Natural killer cell (primary cell): ENCODE measurements at regions of chr3 and their contacts with region 1.

Region 1: GRCh38 chr3:28328188-28329151 is 20.1 kb upstream of the ZCWPW2 start:
- DNase-seq: peak in 1 of 2 donors; percentile 74
- ATAC-seq: peak; percentile 30 to 58 (median 34)
- H3K4me3 ChIP-seq: no peak overlapping the region
- H3K4me3 Mint-ChIP-seq: peak overlapping the region; percentile 50
- H3K27ac ChIP-seq: no peak overlapping the region
- H3K27ac Mint-ChIP-seq: peak overlapping the region; percentile 59 to 79
- H3K4me1 ChIP-seq: no peaks in the 10 kb centered on the region
- H3K4me1 Mint-ChIP-seq: peaks cover 36 to 44% of the 10 kb centered on the region in 2 donors
- H3K27me3 ChIP-seq: no peaks in the 10 kb centered on the region
- H3K27me3 Mint-ChIP-seq: no peaks in the 10 kb centered on the region
- CTCF ChIP-seq: peak; percentile 90

Region 2: GRCh38 chr3:27357665-27358258 is 970.7 kb before region 1 on chr3:
- intact Hi-C with region 1: loop called (anchors 2 kb)
- DNase-seq: peak in 1 of 2 donors; percentile 80
- ATAC-seq: peak; percentile 89 to 99 (median 96)
- H3K4me3 ChIP-seq: no peak overlapping the region
- H3K4me3 Mint-ChIP-seq: peak overlapping the region; percentile 4
- H3K27ac ChIP-seq: no peak overlapping the region
- H3K27ac Mint-ChIP-seq: no peak overlapping the region
- H3K4me1 ChIP-seq: peaks cover 5% of the 10 kb centered on the region
- H3K4me1 Mint-ChIP-seq: peaks cover 7 to 23% of the 10 kb centered on the region in 2 donors
- H3K27me3 ChIP-seq: no peaks in the 10 kb centered on the region
- H3K27me3 Mint-ChIP-seq: no peaks in the 10 kb centered on the region
- CTCF ChIP-seq: peak; percentile 68

Region 3: DNA sequence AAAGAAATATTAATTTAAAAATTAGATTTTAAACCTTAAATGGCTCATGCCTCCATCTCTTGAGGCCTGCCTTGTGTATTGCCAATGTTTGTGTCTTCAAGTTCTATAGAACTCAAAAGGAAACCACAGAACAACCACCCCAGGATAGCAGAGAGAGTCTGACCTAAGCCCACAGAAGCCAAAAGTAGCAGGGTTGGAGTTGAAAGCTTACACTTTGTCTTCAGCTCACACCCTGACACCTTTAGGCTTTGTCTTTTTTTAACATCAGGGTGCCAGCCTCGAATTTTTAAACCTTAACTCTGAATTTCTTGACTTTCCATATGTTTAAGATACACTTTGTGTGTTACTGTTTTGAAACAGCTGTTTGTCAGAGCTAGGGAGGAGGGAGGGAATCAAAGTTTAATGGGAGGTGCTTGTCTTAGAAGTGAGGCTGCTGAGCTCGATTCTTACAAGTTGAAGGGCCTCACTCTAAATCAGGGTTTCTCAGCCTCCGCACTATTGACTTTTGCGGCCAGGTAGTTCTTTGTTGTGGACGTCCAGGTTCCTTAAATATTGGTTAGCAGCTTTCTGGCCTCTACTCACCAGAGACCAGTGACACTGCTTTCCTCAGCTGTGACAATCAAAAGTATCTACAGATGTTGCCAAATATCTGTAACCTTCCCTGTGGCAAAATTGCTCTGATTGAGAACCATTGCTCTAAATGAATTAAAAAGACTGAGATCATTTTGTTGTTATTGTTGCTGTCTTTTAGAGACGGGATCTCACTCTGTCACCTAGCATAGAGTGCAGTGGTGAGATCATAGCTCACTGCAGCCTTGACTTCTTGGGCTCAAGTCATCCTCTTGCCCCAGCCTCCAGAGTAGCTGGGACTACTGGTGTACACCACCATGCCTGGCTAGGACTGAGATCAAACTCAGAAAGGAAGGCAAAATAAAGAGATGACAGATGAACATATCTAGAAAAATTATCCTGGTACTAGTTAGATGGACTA is 467.1 kb before region 1 on chr3:
- intact Hi-C with region 1: loop called (anchors 1 kb)
- DNase-seq: peak in 1 of 2 donors; percentile 65
- ATAC-seq: peak; percentile 90 to 99 (median 92)
- H3K4me3 ChIP-seq: no peak overlapping the region
- H3K4me3 Mint-ChIP-seq: peak overlapping the region; percentile 50
- H3K27ac ChIP-seq: peak overlapping the region; percentile 13
- H3K27ac Mint-ChIP-seq: peak overlapping the region; percentile 61 to 69
- H3K4me1 ChIP-seq: peaks cover 26% of the 10 kb centered on the region
- H3K4me1 Mint-ChIP-seq: peaks cover 39 to 40% of the 10 kb centered on the region in 2 donors
- H3K27me3 ChIP-seq: no peaks in the 10 kb centered on the region
- H3K27me3 Mint-ChIP-seq: peaks cover 0 to 3% of the 10 kb centered on the region in 2 donors
- CTCF ChIP-seq: no peak

Region 4: DNA sequence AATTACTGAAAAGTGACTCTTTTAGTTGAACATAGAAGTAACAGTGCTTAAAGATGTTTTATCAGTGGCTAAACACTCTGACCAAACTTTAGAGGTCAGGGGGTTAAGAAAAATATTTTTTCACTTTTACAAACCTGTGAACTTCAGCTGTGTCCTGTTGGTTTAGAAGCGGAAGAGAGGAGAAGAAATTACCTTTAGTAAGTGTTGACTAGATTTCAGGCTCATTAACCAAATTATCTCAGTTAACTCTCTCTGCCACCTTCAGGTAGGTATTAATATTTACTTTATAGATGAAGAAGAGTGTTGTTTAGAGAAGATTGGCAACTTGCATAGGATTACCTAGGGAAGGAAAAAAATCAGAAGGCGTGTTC is 239.0 kb before region 1 on chr3:
- intact Hi-C with region 1: loop called (anchors 5 kb)
- DNase-seq: peak in 1 of 2 donors; percentile 35
- ATAC-seq: peak; percentile 66 to 86 (median 71)
- H3K4me3 ChIP-seq: no peak overlapping the region
- H3K4me3 Mint-ChIP-seq: peak overlapping the region; percentile 59
- H3K27ac ChIP-seq: peak overlapping the region; percentile 58
- H3K27ac Mint-ChIP-seq: peak overlapping the region; percentile 80 to 84
- H3K4me1 ChIP-seq: peaks cover 13% of the 10 kb centered on the region
- H3K4me1 Mint-ChIP-seq: peaks cover 49 to 51% of the 10 kb centered on the region in 2 donors
- H3K27me3 ChIP-seq: no peaks in the 10 kb centered on the region
- H3K27me3 Mint-ChIP-seq: no peaks in the 10 kb centered on the region
- CTCF ChIP-seq: no peak

Region 5: GRCh38 chr3:28262001-28262400 is 66.5 kb before region 1 on chr3:
- intact Hi-C with region 1: no loop called
- DNase-seq: no peak
- ATAC-seq: no peak
- H3K4me3 ChIP-seq: no peak overlapping the region
- H3K4me3 Mint-ChIP-seq: no peak overlapping the region
- H3K27ac ChIP-seq: no peak overlapping the region
- H3K27ac Mint-ChIP-seq: no peak overlapping the region
- H3K4me1 ChIP-seq: no peaks in the 10 kb centered on the region
- H3K4me1 Mint-ChIP-seq: peaks cover 6 to 7% of the 10 kb centered on the region in 2 donors
- H3K27me3 ChIP-seq: no peaks in the 10 kb centered on the region
- H3K27me3 Mint-ChIP-seq: no peaks in the 10 kb centered on the region
- CTCF ChIP-seq: no peak

Region 6: GRCh38 chr3:28295898-28296490 is 32.5 kb before region 1 on chr3:
- intact Hi-C with region 1: loop called (anchors 2 kb)
- DNase-seq: peak in 1 of 2 donors; percentile 19
- ATAC-seq: peak; percentile 28 to 31 (median 29)
- H3K4me3 ChIP-seq: peak overlapping the region; percentile 72
- H3K4me3 Mint-ChIP-seq: peak overlapping the region; percentile 92
- H3K27ac ChIP-seq: peak overlapping the region; percentile 94
- H3K27ac Mint-ChIP-seq: peak overlapping the region; percentile 94 to 95
- H3K4me1 ChIP-seq: peaks cover 9% of the 10 kb centered on the region
- H3K4me1 Mint-ChIP-seq: peaks cover 61 to 72% of the 10 kb centered on the region in 2 donors
- H3K27me3 ChIP-seq: no peaks in the 10 kb centered on the region
- H3K27me3 Mint-ChIP-seq: no peaks in the 10 kb centered on the region
- CTCF ChIP-seq: no peak

Region 7: DNA sequence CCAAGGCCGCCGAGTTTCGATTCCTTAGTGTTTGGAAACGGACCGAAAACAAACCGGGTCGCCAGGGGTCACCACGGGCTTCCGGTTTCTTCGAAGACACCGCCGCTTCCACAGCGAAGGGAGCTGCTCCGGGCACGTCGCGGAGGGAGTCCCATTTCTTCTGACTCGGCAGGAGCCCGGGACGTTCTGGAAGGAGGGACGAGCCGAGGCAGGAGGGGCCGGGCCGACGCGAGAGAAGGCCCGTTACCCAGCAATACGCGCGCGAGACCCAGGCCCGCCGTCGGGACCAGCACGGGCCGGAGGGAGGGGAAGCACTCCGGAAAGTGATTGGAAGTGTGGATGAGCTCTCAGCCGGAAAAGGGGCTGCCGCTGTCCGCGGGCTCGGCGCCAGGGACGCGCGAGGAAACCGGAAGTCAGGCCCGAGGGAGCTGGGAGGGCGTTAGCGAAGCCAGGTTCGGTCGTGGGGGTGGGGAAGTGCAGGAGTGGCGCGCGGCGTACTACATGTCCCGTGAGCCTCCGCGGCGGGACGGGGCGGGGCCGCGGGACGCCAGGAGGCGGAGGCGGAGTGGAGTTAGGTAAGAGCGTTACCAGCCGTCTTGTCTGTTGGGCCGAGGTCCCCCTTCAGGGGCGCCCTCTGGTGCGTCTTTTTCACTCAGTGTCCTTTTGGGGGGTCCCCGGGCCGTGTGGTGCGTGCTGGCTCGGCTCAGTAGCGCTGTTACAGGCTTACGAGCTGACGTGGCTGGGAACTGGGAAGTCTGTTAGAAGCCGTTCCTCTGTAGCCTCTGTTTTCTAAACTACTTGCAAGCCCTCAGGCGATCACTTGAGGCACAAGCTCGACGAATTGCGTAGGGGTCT is 20.4 kb after region 1 on chr3 and contains the starts of genes AZI2 and ZCWPW2:
- intact Hi-C with region 1: loop called (anchors 1 kb)
- DNase-seq: peak; percentile 90 to 96
- ATAC-seq: peak; percentile 82 to 96 (median 87)
- H3K4me3 ChIP-seq: peak within 1 kb of the TSS; percentile 97
- H3K4me3 Mint-ChIP-seq: peak within 1 kb of the TSS; percentile 95
- H3K27ac ChIP-seq: peak within 1 kb of the TSS; percentile 98
- H3K27ac Mint-ChIP-seq: peak within 1 kb of the TSS; percentile 93 to 95
- H3K4me1 ChIP-seq: peaks cover 9% of the 10 kb centered on the region
- H3K4me1 Mint-ChIP-seq: peaks cover 40 to 43% of the 10 kb centered on the region in 2 donors
- H3K27me3 ChIP-seq: no peaks in the 10 kb centered on the region
- H3K27me3 Mint-ChIP-seq: no peaks in the 10 kb centered on the region
- CTCF ChIP-seq: no peak
- total RNA-seq, gene AZI2: 29.3 to 38.6 (median 32.0) TPM
- total RNA-seq, gene ZCWPW2: 0.43 TPM in 1 of 3 donors, not detected in the others